ENCODE measurements at regions of chr12 and their contacts with region 1.

Region 1: GRCh38 chr12:55715833-55716581 is at the start of gene BLOC1S1:
- DNase-seq: peak; percentile 88 to 97 (median 92)
- ATAC-seq: peak; percentile 94
- H3K4me3 Mint-ChIP-seq: peak within 1 kb of the TSS; percentile 86 to 97 (median 90)
- H3K27ac Mint-ChIP-seq: peak within 1 kb of the TSS; percentile 93 to 99 (median 96)
- H3K4me1 Mint-ChIP-seq: peaks cover 12 to 39% (median 35%) of the 10 kb centered on the region in 4 donors
- H3K27me3 Mint-ChIP-seq: peaks cover 0 to 4% (median 0%) of the 10 kb centered on the region in 5 donors
- polyA plus RNA-seq, gene BLOC1S1: 84.3 to 133 (median 117) TPM

Region 2: GRCh38 chr12:55698241-55698935 is 17.6 kb before region 1 on chr12:
- POLR2A ChIA-PET with region 1: no interaction called
- DNase-seq: peak in 1 of 10 donors; percentile 62
- ATAC-seq: no peak
- H3K4me3 Mint-ChIP-seq: no peak overlapping the region
- H3K27ac Mint-ChIP-seq: no peak overlapping the region
- H3K4me1 Mint-ChIP-seq: peaks cover 0 to 2% (median under 1%) of the 10 kb centered on the region in 4 donors
- H3K27me3 Mint-ChIP-seq: no peaks in the 10 kb centered on the region

Region 3: DNA sequence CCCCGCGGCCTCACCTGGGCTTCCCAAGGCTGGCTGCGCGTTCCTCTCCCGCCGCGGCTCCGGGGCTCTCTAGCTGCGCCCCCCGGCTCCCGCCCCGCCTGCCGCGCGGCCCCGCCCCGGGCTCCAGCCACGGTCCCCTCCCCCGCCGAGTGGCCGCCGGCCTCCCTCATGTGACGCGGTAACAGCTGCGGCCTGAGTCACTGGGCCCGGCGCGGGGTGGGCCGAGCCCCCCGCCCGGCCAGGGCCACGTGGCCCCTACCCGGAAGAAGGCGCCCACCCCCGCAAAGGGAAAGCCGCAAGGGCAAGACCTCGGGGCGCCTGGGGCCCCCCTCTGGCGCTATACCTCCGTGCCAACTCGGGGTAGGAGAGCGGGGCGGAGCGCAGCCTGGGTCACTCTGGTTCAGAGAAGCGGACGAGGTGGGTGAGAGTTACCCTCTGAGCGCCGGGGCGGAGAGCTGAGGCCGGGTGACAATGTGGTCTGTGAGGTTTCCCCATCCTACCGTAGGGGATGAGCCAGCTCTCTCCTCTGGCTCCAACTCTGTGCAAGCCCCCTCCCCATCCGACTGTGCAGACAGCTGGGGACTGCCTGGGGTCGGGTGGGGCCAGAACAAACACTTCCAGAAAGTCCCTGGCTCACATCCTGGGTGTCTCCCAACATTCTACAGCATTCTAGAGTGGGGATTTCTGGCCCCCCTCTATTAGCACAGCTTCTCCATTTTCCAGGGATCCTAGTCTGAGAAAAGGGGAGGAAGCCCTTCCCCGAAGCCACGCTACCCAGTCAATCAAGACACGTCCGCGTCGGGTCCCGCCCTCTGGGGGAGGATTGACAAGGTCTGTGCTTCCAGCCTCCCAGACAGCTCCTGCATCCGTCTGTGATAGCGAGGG is 13.2 kb after region 1 on chr12 and contains the start of gene CD63:
- POLR2A ChIA-PET with region 1: interaction called, 23 read pairs
- DNase-seq: peak in 9 of 10 donors; percentile 17 to 76 (median 42)
- ATAC-seq: peak; percentile 59 to 69
- H3K4me3 Mint-ChIP-seq: peak within 1 kb of the TSS; percentile 76 to 95 (median 90)
- H3K27ac Mint-ChIP-seq: peak within 1 kb of the TSS; percentile 91 to 97 (median 94)
- H3K4me1 Mint-ChIP-seq: peaks cover 30 to 59% (median 46%) of the 10 kb centered on the region in 4 donors
- H3K27me3 Mint-ChIP-seq: no peaks in the 10 kb centered on the region
- polyA plus RNA-seq, gene CD63: 119 to 412 (median 135) TPM

Region 4: GRCh38 chr12:55738123-55739024 is 22.4 kb after region 1 on chr12:
- POLR2A ChIA-PET with region 1: interaction called, 10 read pairs
- DNase-seq: peak; percentile 48 to 91 (median 80)
- ATAC-seq: peak; percentile 65 to 80
- H3K4me3 Mint-ChIP-seq: peak overlapping the region; percentile 82 to 95 (median 93)
- H3K27ac Mint-ChIP-seq: peak overlapping the region; percentile 77 to 98 (median 95)
- H3K4me1 Mint-ChIP-seq: peaks cover 16 to 32% (median 26%) of the 10 kb centered on the region in 4 donors
- H3K27me3 Mint-ChIP-seq: no peaks in the 10 kb centered on the region